A673 (cell line): ENCODE measurements at regions of chr14 and their contacts with region 1.

Region 1: DNA sequence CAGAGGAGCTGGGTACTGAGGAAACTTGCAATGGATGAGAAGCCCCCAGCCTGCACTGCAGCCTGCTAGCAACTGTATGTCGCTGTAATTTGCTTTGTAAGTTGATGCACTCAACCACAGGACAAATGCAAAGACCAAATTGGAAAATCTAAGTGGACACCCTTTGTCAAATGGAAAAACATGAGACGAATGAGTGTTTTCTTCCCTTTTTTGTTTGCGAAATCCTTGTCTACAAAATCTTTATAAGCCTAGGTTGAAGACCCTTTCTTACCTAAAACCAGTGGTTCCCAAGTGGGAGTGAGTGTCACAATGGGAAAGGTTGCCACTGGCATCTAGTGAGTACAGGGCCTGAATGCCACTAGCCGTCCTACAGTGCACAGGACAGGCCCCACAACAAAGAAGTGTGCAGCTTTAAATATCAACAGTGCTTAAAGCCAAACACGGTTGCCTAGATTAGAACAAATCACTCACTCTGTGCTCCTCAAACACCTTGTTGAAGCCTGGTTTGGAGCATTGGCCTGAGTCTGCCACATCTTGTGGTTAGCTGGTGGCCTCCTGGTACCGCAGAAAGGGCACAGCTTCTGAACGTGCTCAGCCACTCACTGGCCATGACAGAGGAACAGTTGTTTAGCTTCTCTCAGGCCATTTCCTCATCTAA is 7.6 kb upstream of the VASH1 start:
- DNase-seq: no peak
- H3K4me3 ChIP-seq: no peak overlapping the region
- H3K27ac ChIP-seq: no peak overlapping the region
- H3K4me1 ChIP-seq: no peaks in the 10 kb centered on the region
- H3K27me3 ChIP-seq: no peaks in the 10 kb centered on the region
- CTCF ChIP-seq: no peak

Region 2: GRCh38 chr14:76672123-76672522 is 81.5 kb before region 1 on chr14:
- CTCF ChIA-PET with region 1: no interaction called
- POLR2A ChIA-PET with region 1: no interaction called
- intact Hi-C with region 1: no loop called
- DNase-seq: no peak
- H3K4me3 ChIP-seq: no peak overlapping the region
- H3K27ac ChIP-seq: no peak overlapping the region
- H3K4me1 ChIP-seq: no peaks in the 10 kb centered on the region
- H3K27me3 ChIP-seq: no peaks in the 10 kb centered on the region
- CTCF ChIP-seq: no peak

Region 3: GRCh38 chr14:76715511-76716081 is 38.1 kb before region 1 on chr14:
- CTCF ChIA-PET with region 1: interaction called, 15 read pairs
- POLR2A ChIA-PET with region 1: no interaction called
- intact Hi-C with region 1: no loop called
- DNase-seq: peak; percentile 62
- H3K4me3 ChIP-seq: no peak overlapping the region
- H3K27ac ChIP-seq: no peak overlapping the region
- H3K4me1 ChIP-seq: peaks cover 9% of the 10 kb centered on the region
- H3K27me3 ChIP-seq: no peaks in the 10 kb centered on the region
- CTCF ChIP-seq: no peak

Region 4: GRCh38 chr14:76726551-76726970 is 27.1 kb before region 1 on chr14:
- CTCF ChIA-PET with region 1: no interaction called
- POLR2A ChIA-PET with region 1: no interaction called
- intact Hi-C with region 1: no loop called
- DNase-seq: no peak
- H3K4me3 ChIP-seq: no peak overlapping the region
- H3K27ac ChIP-seq: no peak overlapping the region
- H3K4me1 ChIP-seq: no peaks in the 10 kb centered on the region
- H3K27me3 ChIP-seq: peaks cover 7% of the 10 kb centered on the region
- CTCF ChIP-seq: no peak

Region 5: DNA sequence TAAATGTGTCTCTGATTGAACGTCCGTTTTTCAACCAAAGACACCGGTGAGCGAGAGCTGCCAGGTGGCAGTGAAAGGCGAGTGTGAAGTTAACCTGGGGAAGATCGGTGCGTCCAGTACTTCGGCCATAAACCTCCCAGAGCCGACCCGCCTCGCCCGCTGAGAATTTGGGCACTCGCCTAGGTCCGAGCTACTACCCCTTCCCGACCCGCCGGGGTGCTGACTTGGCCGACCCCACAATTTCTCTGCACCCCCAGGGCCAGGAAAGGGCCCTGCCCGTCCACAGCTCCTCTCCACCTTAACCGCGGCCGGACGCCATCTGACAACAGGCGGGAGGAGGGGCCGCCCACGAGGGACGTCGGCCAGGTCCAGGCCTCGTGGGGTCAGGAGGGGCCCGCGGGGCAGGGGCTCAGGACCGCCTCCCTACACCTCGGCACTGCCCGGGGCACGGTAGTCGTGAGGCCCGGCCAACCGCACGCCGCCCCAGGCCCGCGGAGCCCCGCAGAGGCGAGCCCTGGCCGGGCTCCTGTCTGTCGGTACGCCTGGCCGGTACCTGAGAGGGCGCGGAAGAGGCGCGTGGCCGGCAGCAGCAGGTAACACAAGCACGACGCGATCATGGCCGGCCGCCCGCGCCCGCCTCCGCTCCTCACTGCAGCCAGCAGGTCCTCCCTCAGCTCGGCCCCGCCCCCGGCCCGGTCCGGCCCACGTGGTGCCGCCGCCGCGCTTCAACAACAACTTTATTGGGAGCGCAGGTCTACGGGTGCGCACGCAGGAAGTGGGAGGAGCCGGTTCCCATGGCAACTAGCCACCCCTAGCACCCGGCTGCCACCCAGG is 58.8 kb after region 1 on chr14 and contains the start of gene ANGEL1:
- CTCF ChIA-PET with region 1: no interaction called
- POLR2A ChIA-PET with region 1: no interaction called
- intact Hi-C with region 1: no loop called
- DNase-seq: peak; percentile 97
- H3K4me3 ChIP-seq: peak within 1 kb of the TSS; percentile 86
- H3K27ac ChIP-seq: peak within 1 kb of the TSS; percentile 79
- H3K4me1 ChIP-seq: peaks cover 9% of the 10 kb centered on the region
- H3K27me3 ChIP-seq: no peaks in the 10 kb centered on the region
- CTCF ChIP-seq: no peak
- total RNA-seq, gene ANGEL1: 19.8 and 19.9 TPM in 2 replicates